HEK293T (cell line): ENCODE measurements at regions of chr3 and their contacts with region 1.

Region 1: DNA sequence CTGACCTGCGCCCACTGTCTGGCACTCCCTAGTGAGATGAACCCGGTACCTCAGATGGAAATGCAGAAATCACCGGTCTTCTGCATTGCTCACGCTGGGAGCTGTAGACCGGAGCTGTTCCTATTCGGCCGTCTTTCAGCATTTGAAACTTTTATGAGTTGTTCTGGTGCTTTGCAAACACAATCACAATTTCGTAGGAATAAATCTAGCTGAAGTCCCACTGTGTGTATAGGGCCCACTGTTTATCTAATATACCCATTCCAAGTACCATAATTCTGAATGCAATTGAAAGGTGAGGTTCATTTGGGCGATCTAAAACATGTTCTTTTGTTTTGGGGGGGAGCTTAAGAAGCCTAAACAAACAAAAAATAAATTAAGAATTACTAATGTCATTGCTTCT is 572.1 kb downstream of the FGF12 start:
- DNase-seq: no peak

Region 2: GRCh38 chr3:192745130-192745529 is 589.9 kb after region 1 on chr3:
- CTCF ChIA-PET with region 1: no interaction called
- POLR2A ChIA-PET with region 1: interaction called, 11 read pairs
- DNase-seq: no peak